ENCODE measurements at regions of chr12 and their contacts with region 1.

Region 1: DNA sequence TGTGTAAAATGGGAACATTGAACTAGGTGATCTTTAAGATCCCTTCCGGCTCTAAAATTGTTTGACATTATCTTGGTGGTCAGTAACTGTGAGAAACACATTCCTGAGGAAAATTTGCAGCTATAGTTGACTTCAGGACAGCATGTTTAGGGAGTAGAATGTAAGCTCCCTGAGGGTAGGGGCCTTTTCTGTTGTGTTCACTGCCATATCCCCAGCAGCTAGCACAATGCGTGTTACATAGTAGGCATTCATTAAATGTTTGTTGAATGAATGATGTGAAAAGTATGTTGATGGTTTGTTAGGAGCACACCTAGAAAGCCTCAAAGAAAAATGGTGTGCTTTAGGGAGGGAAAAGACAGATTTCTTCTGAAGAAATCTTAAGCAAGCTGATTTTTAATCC is 38.5 kb upstream of the KCNMB4 start:
- DNase-seq: no peak
- ATAC-seq: no peak
- H3K4me3 ChIP-seq: no peak overlapping the region
- H3K4me3 Mint-ChIP-seq: no peak overlapping the region
- H3K27ac ChIP-seq: no peak overlapping the region
- H3K27ac Mint-ChIP-seq: no peak overlapping the region
- H3K4me1 ChIP-seq: no peaks in the 10 kb centered on the region
- H3K4me1 Mint-ChIP-seq: peaks cover 43% of the 10 kb centered on the region
- H3K27me3 ChIP-seq: no peaks in the 10 kb centered on the region
- H3K27me3 Mint-ChIP-seq: no peaks in the 10 kb centered on the region
- CTCF ChIP-seq: no peak

Region 2: DNA sequence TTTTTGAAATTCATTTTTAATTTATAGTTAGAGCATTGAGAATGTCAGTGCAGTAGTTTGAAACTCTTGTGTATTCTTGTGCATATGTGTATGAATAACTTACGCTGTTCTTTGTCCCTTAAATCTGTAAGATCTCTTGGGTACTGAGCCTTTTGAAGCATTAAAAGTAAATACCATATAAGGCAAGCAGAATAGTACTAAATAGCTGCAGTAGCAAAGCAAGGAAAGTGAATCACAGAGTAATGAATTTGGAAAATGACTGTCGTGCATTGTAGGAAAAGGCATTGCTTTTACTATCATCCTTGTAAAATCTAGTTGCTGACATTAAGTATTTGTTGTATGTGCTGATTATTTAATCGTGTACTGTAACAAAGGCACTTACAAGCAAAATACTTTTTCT is 72.2 kb before region 1 on chr12:
- CTCF ChIA-PET with region 1: no interaction called
- POLR2A ChIA-PET with region 1: no interaction called
- intact Hi-C with region 1: no loop called
- DNase-seq: no peak
- ATAC-seq: no peak
- H3K4me3 ChIP-seq: no peak overlapping the region
- H3K4me3 Mint-ChIP-seq: peak overlapping the region; percentile 33
- H3K27ac ChIP-seq: no peak overlapping the region
- H3K27ac Mint-ChIP-seq: peak overlapping the region; percentile 43
- H3K4me1 ChIP-seq: peaks cover 47% of the 10 kb centered on the region
- H3K4me1 Mint-ChIP-seq: peaks cover 88% of the 10 kb centered on the region
- H3K27me3 ChIP-seq: no peaks in the 10 kb centered on the region
- H3K27me3 Mint-ChIP-seq: no peaks in the 10 kb centered on the region
- CTCF ChIP-seq: no peak

Region 3: GRCh38 chr12:70338526-70338925 is 11.0 kb after region 1 on chr12:
- CTCF ChIA-PET with region 1: no interaction called
- POLR2A ChIA-PET with region 1: no interaction called
- intact Hi-C with region 1: loop called in 1 of 2 experiments (anchors 2 kb)
- DNase-seq: no peak
- ATAC-seq: no peak
- H3K4me3 ChIP-seq: no peak overlapping the region
- H3K4me3 Mint-ChIP-seq: no peak overlapping the region
- H3K27ac ChIP-seq: no peak overlapping the region
- H3K27ac Mint-ChIP-seq: no peak overlapping the region
- H3K4me1 ChIP-seq: no peaks in the 10 kb centered on the region
- H3K4me1 Mint-ChIP-seq: no peaks in the 10 kb centered on the region
- H3K27me3 ChIP-seq: no peaks in the 10 kb centered on the region
- H3K27me3 Mint-ChIP-seq: no peaks in the 10 kb centered on the region
- CTCF ChIP-seq: no peak

Region 4: GRCh38 chr12:70449074-70449761 is 121.7 kb after region 1 on chr12:
- CTCF ChIA-PET with region 1: no interaction called
- POLR2A ChIA-PET with region 1: no interaction called
- intact Hi-C with region 1: no loop called
- DNase-seq: no peak
- ATAC-seq: no peak
- H3K4me3 ChIP-seq: no peak overlapping the region
- H3K4me3 Mint-ChIP-seq: no peak overlapping the region
- H3K27ac ChIP-seq: no peak overlapping the region
- H3K27ac Mint-ChIP-seq: no peak overlapping the region
- H3K4me1 ChIP-seq: no peaks in the 10 kb centered on the region
- H3K4me1 Mint-ChIP-seq: no peaks in the 10 kb centered on the region
- H3K27me3 ChIP-seq: no peaks in the 10 kb centered on the region
- H3K27me3 Mint-ChIP-seq: no peaks in the 10 kb centered on the region
- CTCF ChIP-seq: no peak